Activated T-helper 2 cell treated with anti-CD3 and anti-CD28 coated beads, Interferon-gamma antibody, Interleukin-2, Interleukin-4, amounts not matched to agents 10 μg/mL and 5 μg/mL and 100 μg/mL, durations not matched to agents 14 hours and 24 hours and 36 hours (primary cell): ENCODE measurements at regions of chr9 and their contacts with region 1.

Region 1: DNA sequence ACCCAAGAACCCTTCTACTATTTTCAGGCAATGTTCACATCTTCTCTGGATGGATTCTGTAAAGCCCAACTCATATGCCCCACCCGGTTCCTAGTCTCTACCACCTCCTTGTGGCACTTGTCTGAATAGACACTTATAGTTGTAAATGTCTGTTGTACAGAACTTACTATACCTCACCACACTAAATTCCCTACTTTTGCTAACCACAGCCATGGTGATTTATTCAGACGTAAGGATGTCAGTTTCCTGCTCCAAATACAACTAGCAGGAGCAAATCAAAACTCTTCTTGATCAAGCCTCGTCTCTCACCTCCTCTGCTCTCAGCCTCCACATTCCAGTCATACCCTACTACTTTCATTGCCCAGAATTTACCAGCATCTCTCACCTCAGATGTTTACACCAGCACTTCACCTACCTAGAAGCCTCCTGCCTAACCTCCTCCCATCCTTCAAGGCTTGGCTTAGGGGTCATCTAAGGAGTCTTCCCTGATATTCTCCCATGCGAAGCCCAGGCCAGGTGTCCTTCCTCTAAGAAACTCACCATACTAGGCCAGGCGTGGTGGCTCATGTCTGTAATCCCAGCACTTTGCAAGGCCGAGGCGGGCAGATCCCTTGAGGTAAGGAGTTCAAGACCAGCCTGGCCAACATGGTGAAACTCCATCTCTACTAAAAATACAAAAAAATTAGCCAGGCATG is 75.5 kb downstream of the MAPKAP1 start:
- DNase-seq: no peak
- H3K4me3 Mint-ChIP-seq: peak overlapping the region; percentile 11
- H3K27ac Mint-ChIP-seq: peak overlapping the region; percentile 40
- H3K4me1 Mint-ChIP-seq: peaks cover 57% of the 10 kb centered on the region
- H3K27me3 Mint-ChIP-seq: no peaks in the 10 kb centered on the region

Region 2: GRCh38 chr9:125391704-125392103 is 239.8 kb before region 1 on chr9:
- intact Hi-C with region 1: no loop called
- DNase-seq: no peak
- H3K4me3 Mint-ChIP-seq: no peak overlapping the region
- H3K27ac Mint-ChIP-seq: no peak overlapping the region
- H3K4me1 Mint-ChIP-seq: no peaks in the 10 kb centered on the region
- H3K27me3 Mint-ChIP-seq: no peaks in the 10 kb centered on the region

Region 3: GRCh38 chr9:125407974-125408900 is 223.3 kb before region 1 on chr9:
- intact Hi-C with region 1: loop called (anchors 1 kb)
- DNase-seq: peak; percentile 59
- H3K4me3 Mint-ChIP-seq: peak overlapping the region; percentile 77
- H3K27ac Mint-ChIP-seq: no peak overlapping the region
- H3K4me1 Mint-ChIP-seq: peaks cover 11% of the 10 kb centered on the region
- H3K27me3 Mint-ChIP-seq: peaks cover 15% of the 10 kb centered on the region

Region 4: GRCh38 chr9:125558453-125559092 is 73.0 kb before region 1 on chr9:
- intact Hi-C with region 1: loop called (anchors 1 kb)
- DNase-seq: peak; percentile 36
- H3K4me3 Mint-ChIP-seq: no peak overlapping the region
- H3K27ac Mint-ChIP-seq: no peak overlapping the region
- H3K4me1 Mint-ChIP-seq: peaks cover 27% of the 10 kb centered on the region
- H3K27me3 Mint-ChIP-seq: no peaks in the 10 kb centered on the region

Region 5: DNA sequence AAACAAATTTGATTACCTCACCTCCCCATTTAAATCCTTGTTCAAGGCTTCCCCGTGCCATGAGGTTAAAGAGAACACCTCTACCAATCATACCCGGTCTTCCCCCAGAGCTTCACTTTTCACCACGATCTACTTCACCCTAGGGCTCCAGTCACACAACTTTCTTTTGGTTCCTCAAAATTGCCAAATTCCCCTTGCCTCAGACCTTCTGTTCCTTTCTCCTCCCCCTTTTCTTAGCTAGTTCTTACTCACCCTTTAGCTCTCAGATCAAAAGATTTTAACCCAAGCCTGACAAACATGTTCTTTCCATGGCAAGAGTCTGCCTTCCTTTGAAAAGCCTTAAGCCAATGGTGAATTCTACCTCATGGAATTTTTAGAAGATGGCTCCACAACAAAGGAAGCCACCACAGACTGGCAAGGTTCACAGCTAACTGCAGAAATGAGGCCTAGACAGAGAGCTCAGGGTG is 18.8 kb after region 1 on chr9:
- intact Hi-C with region 1: loop called (anchors 1 kb)
- DNase-seq: no peak
- H3K4me3 Mint-ChIP-seq: peak overlapping the region; percentile 3
- H3K27ac Mint-ChIP-seq: peak overlapping the region; percentile 64
- H3K4me1 Mint-ChIP-seq: peaks cover 55% of the 10 kb centered on the region
- H3K27me3 Mint-ChIP-seq: no peaks in the 10 kb centered on the region

Region 6: DNA sequence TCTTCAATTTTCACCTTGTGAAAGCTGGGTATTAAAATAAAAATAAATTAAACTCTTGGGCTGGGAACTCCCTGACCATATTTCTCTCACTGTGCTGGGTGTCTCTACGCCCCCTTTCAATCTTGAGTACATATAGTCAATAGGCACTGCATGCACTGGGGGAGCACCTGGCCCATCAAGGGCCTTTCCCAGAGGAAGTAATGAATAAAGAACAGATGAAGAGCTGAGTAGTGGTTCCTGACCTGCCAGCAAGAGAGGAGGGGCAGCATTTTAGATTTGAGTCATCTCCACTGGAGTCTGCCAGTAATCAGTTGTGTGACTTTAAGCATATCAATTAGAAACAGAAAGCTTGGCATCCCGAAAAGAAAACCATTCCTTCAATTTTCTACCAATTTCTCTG is 69.3 kb after region 1 on chr9:
- intact Hi-C with region 1: loop called (anchors 1 kb)
- DNase-seq: no peak
- H3K4me3 Mint-ChIP-seq: no peak overlapping the region
- H3K27ac Mint-ChIP-seq: peak overlapping the region; percentile 61
- H3K4me1 Mint-ChIP-seq: peaks cover 39% of the 10 kb centered on the region
- H3K27me3 Mint-ChIP-seq: no peaks in the 10 kb centered on the region

Region 7: DNA sequence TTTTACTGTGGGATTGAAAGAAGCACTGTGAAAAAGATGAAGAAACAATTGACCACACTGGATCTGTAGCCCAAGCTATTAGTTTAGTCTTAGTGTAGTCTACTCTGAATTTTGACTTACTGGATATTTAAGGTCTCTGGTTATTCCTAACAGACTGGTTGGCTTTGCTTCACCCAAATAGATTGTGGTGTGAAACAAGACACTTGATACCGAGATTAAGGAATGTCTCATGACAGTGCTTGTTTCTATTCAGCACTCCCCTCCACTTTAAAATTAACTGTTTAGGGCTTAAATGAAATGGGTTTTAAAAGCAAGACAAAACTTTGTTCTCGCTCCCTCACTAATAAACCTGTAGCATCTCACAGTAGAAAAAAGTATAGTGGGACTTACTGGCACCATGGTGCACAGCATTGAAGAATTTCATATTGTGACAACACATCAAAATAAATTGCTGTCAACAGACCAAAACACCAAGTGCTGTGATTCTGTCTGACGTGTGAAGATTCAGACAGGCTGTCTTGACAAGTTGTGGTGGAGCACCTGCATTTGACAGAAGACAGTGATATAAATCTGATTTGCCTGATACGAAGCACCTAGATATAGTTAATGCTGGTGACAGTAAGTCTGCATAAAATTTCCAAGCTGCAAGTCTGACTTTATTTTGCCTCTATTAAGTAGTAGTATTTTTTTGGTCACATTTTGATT is 188.7 kb after region 1 on chr9:
- intact Hi-C with region 1: loop called (anchors 5 kb)
- DNase-seq: no peak
- H3K4me3 Mint-ChIP-seq: no peak overlapping the region
- H3K27ac Mint-ChIP-seq: no peak overlapping the region
- H3K4me1 Mint-ChIP-seq: peaks cover 18% of the 10 kb centered on the region
- H3K27me3 Mint-ChIP-seq: peaks cover 2% of the 10 kb centered on the region

Region 8: DNA sequence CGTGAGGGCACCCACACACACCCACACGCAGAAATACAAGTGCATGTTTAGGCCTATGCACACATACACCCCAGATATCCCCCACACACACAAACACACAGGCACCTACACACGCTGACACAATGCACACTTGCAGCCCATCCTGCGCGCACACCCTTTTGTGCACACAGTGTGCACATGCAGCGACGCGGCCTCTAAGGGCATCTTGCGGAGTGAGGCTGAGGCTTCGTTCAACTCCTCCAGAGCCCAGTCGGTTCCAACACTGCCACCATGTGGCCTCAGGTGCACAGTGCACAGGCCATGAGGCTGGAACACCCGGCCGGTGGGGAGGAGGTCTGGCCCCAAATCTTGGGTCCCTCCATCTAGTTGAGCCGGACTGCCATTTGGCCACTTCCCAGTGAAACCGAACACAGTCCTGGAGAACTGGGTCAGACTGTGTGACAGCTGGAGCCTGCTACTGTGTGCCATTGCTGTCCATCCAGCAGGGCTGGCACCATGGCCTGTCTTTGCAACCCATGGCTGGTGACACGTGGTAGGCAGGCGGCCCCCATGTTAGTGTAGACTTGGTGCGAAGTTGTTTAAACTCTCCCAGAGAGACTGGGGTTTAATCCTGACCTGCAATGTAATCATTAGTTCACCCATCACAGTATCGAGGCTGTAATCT is 597.4 kb after region 1 on chr9:
- intact Hi-C with region 1: loop called (anchors 2 kb)
- DNase-seq: peak; percentile 40
- H3K4me3 Mint-ChIP-seq: no peak overlapping the region
- H3K27ac Mint-ChIP-seq: no peak overlapping the region
- H3K4me1 Mint-ChIP-seq: no peaks in the 10 kb centered on the region
- H3K27me3 Mint-ChIP-seq: peaks cover 23% of the 10 kb centered on the region